ENCODE measurements at regions of chr17 and their contacts with region 1.

Region 1: GRCh38 chr17:79082311-79083190 is 7.9 kb downstream of the ENGASE start:
- DNase-seq: peak; percentile 22
- ATAC-seq: peak; percentile 85
- H3K4me3 ChIP-seq: no peak overlapping the region
- H3K27ac ChIP-seq: no peak overlapping the region
- H3K4me1 ChIP-seq: no peaks in the 10 kb centered on the region
- H3K27me3 ChIP-seq: no peaks in the 10 kb centered on the region
- CTCF ChIP-seq: peak; percentile 86 to 99 (median 98)
- POLR2A ChIP-seq: no peak
- RAD21 ChIP-seq: peak; percentile 72

Region 2: GRCh38 chr17:79019632-79020584 is 62.6 kb before region 1 on chr17:
- CTCF ChIA-PET with region 1: interaction called, 7 read pairs
- POLR2A ChIA-PET with region 1: no interaction called
- RAD21 ChIA-PET with region 1: interaction called in 1 of 2 experiments, 4 read pairs
- intact Hi-C with region 1: loop called (anchors 1 kb)
- DNase-seq: peak; percentile 76
- ATAC-seq: peak; percentile 72
- H3K4me3 ChIP-seq: no peak overlapping the region
- H3K27ac ChIP-seq: no peak overlapping the region
- H3K4me1 ChIP-seq: peaks cover 4 to 24% of the 10 kb centered on the region in 2 experiments
- H3K27me3 ChIP-seq: no peaks in the 10 kb centered on the region
- CTCF ChIP-seq: peak; percentile 89 to 99 (median 96)
- POLR2A ChIP-seq: no peak
- RAD21 ChIP-seq: peak; percentile 95

Region 3: DNA sequence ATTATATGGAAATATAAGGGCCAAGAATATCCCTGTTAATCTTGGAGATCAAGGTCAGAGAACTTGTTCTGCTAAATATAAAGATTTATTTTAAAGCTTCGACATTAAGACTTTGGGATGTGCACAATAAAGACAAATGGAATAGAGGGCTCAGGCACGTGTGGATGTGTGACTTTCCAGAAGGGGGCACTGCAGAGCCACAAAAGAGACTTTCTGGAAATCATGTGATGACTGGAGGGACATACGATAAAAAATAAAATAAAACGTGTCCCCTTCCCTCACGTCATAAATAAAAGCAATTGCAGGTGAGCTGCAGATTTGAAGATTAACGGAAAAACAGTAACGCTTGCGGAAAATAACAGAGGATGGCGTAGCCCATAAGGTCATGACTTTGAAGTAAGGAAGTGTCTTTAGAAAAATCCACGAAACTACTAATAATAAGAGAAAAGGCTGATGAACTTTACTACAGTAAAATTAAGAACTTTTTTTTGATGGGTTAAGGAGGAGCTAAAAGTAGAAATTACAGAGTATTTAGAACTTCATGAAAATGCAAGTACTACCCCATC is 17.4 kb before region 1 on chr17:
- CTCF ChIA-PET with region 1: interaction called, 8 read pairs
- POLR2A ChIA-PET with region 1: no interaction called
- RAD21 ChIA-PET with region 1: no interaction called
- intact Hi-C with region 1: loop called (anchors 1 kb)
- DNase-seq: peak; percentile 52
- ATAC-seq: peak; percentile 78
- H3K4me3 ChIP-seq: no peak overlapping the region
- H3K27ac ChIP-seq: no peak overlapping the region
- H3K4me1 ChIP-seq: no peaks in the 10 kb centered on the region
- H3K27me3 ChIP-seq: no peaks in the 10 kb centered on the region
- CTCF ChIP-seq: peak; percentile 64 to 84 (median 76); a peak in 5 of 6 replicates
- POLR2A ChIP-seq: no peak
- RAD21 ChIP-seq: peak; percentile 70

Region 4: DNA sequence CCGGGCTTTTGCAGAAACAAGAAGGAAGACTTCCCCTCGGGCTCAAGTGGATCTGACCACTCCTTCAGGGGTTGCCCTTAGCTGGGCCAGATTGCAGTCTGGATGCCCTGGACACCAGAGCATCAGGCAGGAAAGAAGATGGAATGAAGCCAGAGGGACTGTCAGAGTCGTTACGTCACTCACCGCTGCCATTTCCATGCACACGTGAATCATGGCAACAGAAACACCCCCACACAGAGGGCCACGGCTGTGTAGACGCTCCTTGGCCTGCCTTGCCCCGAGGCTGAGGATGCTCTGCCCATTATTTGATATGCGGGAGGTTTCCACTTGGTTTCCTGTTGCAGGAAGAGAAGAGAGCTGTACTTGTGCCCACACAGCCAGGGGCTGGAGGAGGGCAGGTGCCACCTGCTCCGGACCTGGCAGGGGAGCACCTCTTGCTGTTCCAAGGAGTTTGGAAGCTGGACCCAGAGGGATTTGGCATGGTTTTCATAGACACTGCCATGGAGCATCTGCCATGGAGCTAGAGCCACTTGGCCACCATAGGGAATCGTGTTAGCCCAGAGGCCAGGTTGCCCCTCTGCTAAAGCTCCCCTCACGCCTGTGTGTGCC is 498.9 kb after region 1 on chr17:
- CTCF ChIA-PET with region 1: no interaction called
- POLR2A ChIA-PET with region 1: no interaction called
- RAD21 ChIA-PET with region 1: no interaction called
- intact Hi-C with region 1: no loop called
- DNase-seq: no peak
- ATAC-seq: no peak
- H3K4me3 ChIP-seq: no peak overlapping the region
- H3K27ac ChIP-seq: no peak overlapping the region
- H3K4me1 ChIP-seq: no peaks in the 10 kb centered on the region
- H3K27me3 ChIP-seq: peaks cover 55% of the 10 kb centered on the region
- CTCF ChIP-seq: no peak
- POLR2A ChIP-seq: no peak
- RAD21 ChIP-seq: no peak

Measured in HCT116 (cell line).